Mammary epithelial cell (primary cell): ENCODE measurements at regions of chr13 and their contacts with region 1.

Region 1: GRCh38 chr13:112510002-112510780 is 77.8 kb downstream of the TUBGCP3 start:
- DNase-seq: peak; percentile 14
- H3K4me3 ChIP-seq: no peak overlapping the region
- H3K27ac ChIP-seq: no peak overlapping the region
- H3K4me1 ChIP-seq: no peaks in the 10 kb centered on the region
- H3K27me3 ChIP-seq: no peaks in the 10 kb centered on the region
- CTCF ChIP-seq: peak; percentile 44 to 60

Region 2: GRCh38 chr13:111474136-111475002 is 1035.8 kb before region 1 on chr13:
- CTCF ChIA-PET with region 1: no interaction called
- dilution Hi-C with region 1: no loop called
- in situ Hi-C with region 1: no loop called
- intact Hi-C with region 1: loop called (anchors 1 kb)
- DNase-seq: peak; percentile 19
- H3K4me3 ChIP-seq: no peak overlapping the region
- H3K27ac ChIP-seq: no peak overlapping the region
- H3K4me1 ChIP-seq: no peaks in the 10 kb centered on the region
- H3K27me3 ChIP-seq: no peaks in the 10 kb centered on the region
- CTCF ChIP-seq: peak; percentile 23 to 47

Region 3: GRCh38 chr13:112392719-112393118 is 117.5 kb before region 1 on chr13:
- CTCF ChIA-PET with region 1: no interaction called
- dilution Hi-C with region 1: no loop called
- in situ Hi-C with region 1: no loop called
- intact Hi-C with region 1: no loop called
- DNase-seq: no peak
- H3K4me3 ChIP-seq: no peak overlapping the region
- H3K27ac ChIP-seq: no peak overlapping the region
- H3K4me1 ChIP-seq: no peaks in the 10 kb centered on the region
- H3K27me3 ChIP-seq: no peaks in the 10 kb centered on the region
- CTCF ChIP-seq: no peak

Region 4: GRCh38 chr13:112606109-112607001 is 96.2 kb after region 1 on chr13:
- CTCF ChIA-PET with region 1: no interaction called
- dilution Hi-C with region 1: no loop called
- in situ Hi-C with region 1: no loop called
- intact Hi-C with region 1: loop called (anchors 1 kb)
- DNase-seq: peak; percentile 80
- H3K4me3 ChIP-seq: peak overlapping the region; percentile 52 to 70 (median 55)
- H3K27ac ChIP-seq: no peak overlapping the region
- H3K4me1 ChIP-seq: peaks cover 4% of the 10 kb centered on the region
- H3K27me3 ChIP-seq: no peaks in the 10 kb centered on the region
- CTCF ChIP-seq: peak; percentile 69 to 88

Region 5: GRCh38 chr13:112928972-112929782 is 419.0 kb after region 1 on chr13:
- CTCF ChIA-PET with region 1: no interaction called
- dilution Hi-C with region 1: no loop called
- in situ Hi-C with region 1: no loop called
- intact Hi-C with region 1: no loop called
- DNase-seq: no peak
- H3K4me3 ChIP-seq: no peak overlapping the region
- H3K27ac ChIP-seq: no peak overlapping the region
- H3K4me1 ChIP-seq: peaks cover 10% of the 10 kb centered on the region
- H3K27me3 ChIP-seq: no peaks in the 10 kb centered on the region
- CTCF ChIP-seq: no peak